ENCODE measurements at regions of chr11 and their contacts with region 1.

Region 1: GRCh38 chr11:3021125-3021524 is 29.0 kb upstream of the NAP1L4 start:
- DNase-seq: peak; percentile 33 to 43
- H3K4me3 ChIP-seq: no peak overlapping the region
- H3K27ac ChIP-seq: no peak overlapping the region
- H3K4me1 ChIP-seq: no peaks in the 10 kb centered on the region; the same call in 1 of the 2 replicates
- H3K27me3 ChIP-seq: no peaks in the 10 kb centered on the region
- CTCF ChIP-seq: peak; percentile 52

Region 2: GRCh38 chr11:2955906-2956476 is 65.1 kb before region 1 on chr11:
- CTCF ChIA-PET with region 1: no interaction called
- POLR2A ChIA-PET with region 1: no interaction called
- intact Hi-C with region 1: loop called (anchors 5 kb)
- DNase-seq: no peak
- H3K4me3 ChIP-seq: no peak overlapping the region
- H3K27ac ChIP-seq: no peak overlapping the region
- H3K4me1 ChIP-seq: no peaks in the 10 kb centered on the region; the same call in 1 of the 2 replicates
- H3K27me3 ChIP-seq: no peaks in the 10 kb centered on the region
- CTCF ChIP-seq: no peak

Region 3: GRCh38 chr11:2975594-2975993 is 45.5 kb before region 1 on chr11:
- CTCF ChIA-PET with region 1: interaction called, 4 read pairs
- POLR2A ChIA-PET with region 1: no interaction called
- intact Hi-C with region 1: loop called (anchors 1 kb)
- DNase-seq: no peak
- H3K4me3 ChIP-seq: no peak overlapping the region
- H3K27ac ChIP-seq: no peak overlapping the region
- H3K4me1 ChIP-seq: no peaks in the 10 kb centered on the region
- H3K27me3 ChIP-seq: no peaks in the 10 kb centered on the region
- CTCF ChIP-seq: peak; percentile 42; the same call in 1 of the 2 replicates